Dorsolateral prefrontal cortex (tissue), 120 donors: ENCODE measurements at regions of chr11 and their contacts with region 1.

Region 1: DNA sequence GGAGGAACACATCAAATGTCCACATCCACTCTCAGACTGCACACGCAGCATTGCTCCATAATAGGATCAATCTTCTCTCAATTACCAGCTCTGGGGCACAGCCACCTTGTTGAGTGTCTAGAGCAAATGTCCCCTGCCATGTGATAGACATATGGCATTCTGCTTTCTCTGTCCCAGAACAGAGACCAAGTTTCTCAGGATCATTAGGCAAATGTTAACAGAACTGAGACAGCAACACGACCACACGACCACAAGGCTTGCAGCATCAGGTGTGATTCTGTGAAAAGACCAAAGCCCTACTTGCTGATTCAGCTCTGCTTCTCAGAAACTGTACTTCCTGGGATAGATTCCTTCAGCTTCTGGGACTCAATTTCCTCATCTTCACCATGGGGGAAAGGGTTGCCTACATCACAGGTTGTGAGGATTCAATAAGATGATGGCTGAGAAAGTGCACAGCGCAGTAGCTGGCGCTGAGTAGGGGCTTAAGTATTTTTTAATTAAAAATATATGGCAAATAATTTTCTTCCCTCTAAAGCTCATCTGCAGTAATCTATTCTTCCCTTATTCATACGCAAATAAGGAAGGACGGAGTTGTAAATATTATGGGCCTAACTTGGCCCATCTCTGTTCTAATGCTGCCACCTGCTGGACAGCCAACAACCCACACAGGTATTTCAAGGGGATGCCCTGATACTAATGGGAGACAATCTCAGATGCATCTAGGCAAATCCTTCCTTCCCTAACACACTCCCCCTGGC is 54.3 kb upstream of the USP47 start:
- DNase-seq: peak; percentile 64 to 88 (median 78)
- H3K4me3 ChIP-seq: no peak overlapping the region
- H3K27ac ChIP-seq: no peak overlapping the region
- H3K27me3 ChIP-seq: no peaks in the 10 kb centered on the region
- CTCF ChIP-seq: peak; percentile 86 to 100 (median 94)

Region 2: DNA sequence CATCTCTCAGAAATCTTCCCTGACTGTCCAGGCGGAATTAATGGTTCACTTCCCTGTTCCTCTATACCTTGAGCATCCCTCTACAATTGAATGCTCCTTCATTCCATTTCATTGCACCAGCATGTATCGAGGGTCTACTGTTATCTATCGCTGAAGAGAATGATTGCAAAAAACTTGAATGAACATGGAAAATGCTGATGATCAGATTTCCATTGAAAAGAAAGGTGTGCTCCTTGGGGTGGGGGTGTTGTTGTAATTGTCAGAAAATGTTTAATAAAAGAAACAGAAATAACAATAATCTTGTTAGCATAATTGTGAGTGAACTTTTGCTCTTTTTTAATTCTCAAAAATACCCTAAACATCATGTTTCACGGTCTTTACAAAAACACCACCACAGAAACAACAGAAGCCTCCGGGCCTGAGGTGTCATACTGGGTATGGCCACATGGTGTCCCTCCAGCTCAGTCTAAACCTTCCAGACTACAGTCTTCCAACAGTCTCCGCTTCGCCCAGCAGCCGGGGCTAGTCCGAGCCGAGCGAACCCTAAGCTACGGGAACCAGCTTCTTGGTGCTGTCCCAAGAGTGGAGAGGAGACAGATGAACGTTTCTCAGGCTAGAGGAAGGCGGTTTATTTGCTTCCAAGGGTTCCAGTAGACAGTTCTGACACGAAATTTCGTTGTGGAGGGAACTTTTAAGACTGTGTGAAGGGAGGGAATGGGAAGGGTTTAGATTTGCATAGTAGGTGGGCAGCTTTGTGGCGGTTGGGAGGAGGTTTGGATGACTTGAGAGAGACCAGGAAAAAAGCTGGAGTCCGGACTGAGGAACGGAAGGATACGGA is 853.8 kb before region 1 on chr11:
- intact Hi-C with region 1: loop called (anchors 2 kb)
- DNase-seq: peak; percentile 83 to 94 (median 92)
- H3K4me3 ChIP-seq: peak overlapping the region in 58 of 59 donors; percentile 17 to 69 (median 42)
- H3K27ac ChIP-seq: peak overlapping the region in 35 of 59 donors; percentile 6 to 96 (median 61)
- H3K27me3 ChIP-seq: no peaks in the 10 kb centered on the region
- CTCF ChIP-seq: peak; percentile 68 to 100 (median 98)

Region 3: GRCh38 chr11:11036848-11037732 is 750.4 kb before region 1 on chr11:
- intact Hi-C with region 1: loop called in 1 of 2 experiments (anchors 5 kb)
- DNase-seq: peak in 3 of 10 donors; percentile 46 to 65 (median 51)
- H3K4me3 ChIP-seq: no peak overlapping the region
- H3K27ac ChIP-seq: peak overlapping the region in 37 of 59 donors; percentile 0 to 79 (median 65)
- H3K27me3 ChIP-seq: no peaks in the 10 kb centered on the region
- CTCF ChIP-seq: peak; percentile 47 to 87 (median 74)

Region 4: DNA sequence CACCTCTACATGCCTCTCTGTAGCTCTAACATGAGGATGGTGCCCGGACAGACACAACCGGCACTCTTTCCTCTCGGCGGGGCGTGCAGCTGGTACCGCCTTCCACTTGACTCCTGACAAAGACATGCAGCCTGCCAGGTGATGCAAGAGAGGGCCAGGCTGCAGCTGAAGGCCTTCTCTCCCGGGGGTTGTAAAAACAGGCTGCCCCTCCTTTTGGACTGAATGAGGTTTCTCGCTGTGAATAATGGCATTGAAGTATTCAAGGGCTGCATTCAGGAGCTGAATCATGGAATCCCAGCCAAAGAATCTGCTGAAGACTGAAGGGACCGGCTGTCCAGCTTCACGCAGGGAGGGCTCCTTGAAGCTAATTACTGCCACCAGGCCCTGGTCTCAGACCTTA is 276.5 kb before region 1 on chr11:
- intact Hi-C with region 1: no loop called
- DNase-seq: peak in 7 of 10 donors; percentile 27 to 71 (median 53)
- H3K4me3 ChIP-seq: no peak overlapping the region
- H3K27ac ChIP-seq: peak overlapping the region in 43 of 59 donors; percentile 1 to 75 (median 46)
- H3K27me3 ChIP-seq: no peaks in the 10 kb centered on the region
- CTCF ChIP-seq: peak in 3 of 56 donors; percentile 9 to 22 (median 10)

Region 5: DNA sequence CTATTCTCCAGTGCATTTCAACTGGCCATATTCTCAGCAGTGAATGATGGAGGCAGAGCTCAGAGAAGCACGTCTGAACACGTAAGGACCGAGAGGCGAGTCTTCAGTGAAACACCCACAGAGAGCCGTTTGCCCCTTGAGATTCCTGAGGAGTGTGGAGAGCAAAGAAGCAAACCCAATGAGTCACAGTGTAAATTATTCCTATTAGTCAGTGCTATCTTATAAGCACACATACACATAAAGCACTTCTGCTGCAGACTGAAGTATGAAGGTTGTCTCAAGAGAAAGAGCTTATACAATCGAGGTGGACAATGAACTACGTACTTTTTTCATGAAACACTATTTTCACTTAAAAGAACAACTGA is 203.1 kb before region 1 on chr11:
- intact Hi-C with region 1: loop called in 1 of 2 experiments (anchors 5 kb)
- DNase-seq: no peak
- H3K4me3 ChIP-seq: no peak overlapping the region
- H3K27ac ChIP-seq: no peak overlapping the region
- H3K27me3 ChIP-seq: no peaks in the 10 kb centered on the region
- CTCF ChIP-seq: no peak